Activated CD4-positive, alpha-beta T cell treated with anti-CD3 and anti-CD28 coated beads, Interleukin-2, amount 10 ng/mL, durations not matched to agents 24 days and 14 days (primary cell): ENCODE measurements at regions of chr3 and their contacts with region 1.

Region 1: DNA sequence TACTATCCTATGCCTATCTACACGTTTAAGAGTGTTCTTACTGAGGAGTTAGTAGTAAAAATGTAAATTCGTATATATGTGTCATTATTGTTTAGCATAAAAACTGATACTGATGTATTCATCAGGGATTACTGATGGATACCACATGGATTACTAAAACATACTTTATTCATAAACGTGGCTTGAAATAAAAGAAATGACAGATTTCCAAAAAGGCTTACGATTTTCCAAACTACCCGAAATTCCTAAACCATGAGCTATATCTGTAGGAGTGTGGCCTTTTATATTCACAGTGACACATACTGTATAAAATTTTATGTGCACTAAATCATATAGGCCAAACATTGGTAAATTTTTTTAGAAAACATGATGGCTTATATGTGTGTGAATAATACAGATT is 6.9 kb downstream of the TSC22D2 start:
- DNase-seq: no peak
- H3K4me3 Mint-ChIP-seq: peak overlapping the region; percentile 61
- H3K27ac Mint-ChIP-seq: no peak overlapping the region
- H3K4me1 Mint-ChIP-seq: peaks cover 50% of the 10 kb centered on the region
- H3K27me3 Mint-ChIP-seq: no peaks in the 10 kb centered on the region

Region 2: GRCh38 chr3:150335631-150336030 is 79.3 kb before region 1 on chr3:
- intact Hi-C with region 1: no loop called
- DNase-seq: no peak
- H3K4me3 Mint-ChIP-seq: no peak overlapping the region
- H3K27ac Mint-ChIP-seq: no peak overlapping the region
- H3K4me1 Mint-ChIP-seq: no peaks in the 10 kb centered on the region
- H3K27me3 Mint-ChIP-seq: peaks cover 25% of the 10 kb centered on the region

Region 3: DNA sequence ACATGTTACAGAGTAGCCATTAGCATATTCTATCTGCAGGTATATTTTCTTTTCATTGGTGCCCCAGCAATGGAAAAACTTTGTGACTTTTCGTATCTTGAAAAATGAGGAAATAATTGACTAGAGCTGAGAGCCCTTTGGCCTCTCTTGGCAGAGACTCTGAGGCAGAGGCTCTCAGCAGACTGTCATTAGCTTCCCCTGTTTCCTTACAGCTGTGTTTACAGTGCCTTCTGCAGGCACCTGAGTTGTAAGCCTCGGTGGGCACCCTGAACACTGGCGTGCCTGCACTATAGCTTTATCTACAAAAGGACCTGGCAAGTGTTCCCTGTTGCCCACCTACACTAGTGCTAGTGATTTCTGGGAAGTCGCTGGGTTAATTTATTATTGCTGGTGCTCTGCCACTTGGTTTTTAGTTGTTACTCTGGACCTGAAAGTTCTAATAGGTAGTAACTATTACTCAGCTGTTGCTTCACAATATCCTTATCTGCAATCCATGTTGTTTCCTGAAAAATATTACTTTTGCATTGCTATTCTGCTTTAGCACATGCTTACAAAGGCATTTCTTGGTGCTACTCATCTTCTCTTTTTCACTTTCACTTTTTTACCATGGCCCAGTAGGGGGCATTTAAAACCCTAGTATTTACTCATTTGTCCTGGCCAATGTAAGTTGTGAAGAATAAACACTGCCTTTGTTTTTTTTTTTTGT is 795.9 kb after region 1 on chr3:
- intact Hi-C with region 1: loop called (anchors 5 kb)
- DNase-seq: peak; percentile 75
- H3K4me3 Mint-ChIP-seq: peak overlapping the region; percentile 76
- H3K27ac Mint-ChIP-seq: peak overlapping the region; percentile 90
- H3K4me1 Mint-ChIP-seq: peaks cover 56% of the 10 kb centered on the region
- H3K27me3 Mint-ChIP-seq: no peaks in the 10 kb centered on the region